ENCODE measurements at regions of chr10 and their contacts with region 1.

Region 1: GRCh38 chr10:48594803-48595538 is 9.9 kb downstream of the ARHGAP22 start:
- DNase-seq: no peak
- H3K4me3 Mint-ChIP-seq: no peak overlapping the region
- H3K27ac Mint-ChIP-seq: no peak overlapping the region
- H3K4me1 Mint-ChIP-seq: no peaks in the 10 kb centered on the region
- H3K27me3 Mint-ChIP-seq: peaks cover 4% of the 10 kb centered on the region

Region 2: DNA sequence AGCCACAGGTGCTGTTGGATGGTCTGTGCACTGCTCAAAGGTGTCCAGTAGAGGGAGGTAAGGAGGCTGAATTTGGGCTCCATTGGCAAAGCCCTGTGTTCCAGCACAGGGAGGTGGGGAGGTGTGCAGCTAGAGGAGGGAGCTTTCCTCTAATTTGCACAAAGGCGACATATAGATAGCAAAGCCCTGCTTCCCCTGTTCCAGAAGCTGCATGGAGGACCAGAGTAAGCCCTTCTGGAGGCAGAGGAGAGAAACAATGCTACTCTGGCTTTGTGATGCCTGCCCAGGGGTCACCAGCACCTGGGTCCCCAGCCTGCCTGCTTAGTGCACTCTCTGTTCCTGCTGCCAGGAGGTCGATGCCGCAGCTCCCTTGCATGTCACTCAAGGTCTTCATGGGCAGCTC is 13.3 kb after region 1 on chr10:
- intact Hi-C with region 1: loop called (anchors 1 kb)
- DNase-seq: no peak
- H3K4me3 Mint-ChIP-seq: no peak overlapping the region
- H3K27ac Mint-ChIP-seq: no peak overlapping the region
- H3K4me1 Mint-ChIP-seq: no peaks in the 10 kb centered on the region
- H3K27me3 Mint-ChIP-seq: peaks cover 25% of the 10 kb centered on the region

Measured in activated T-helper 2 cell treated with anti-CD3 and anti-CD28 coated beads, Interferon-gamma antibody, Interleukin-2, Interleukin-4, amounts not matched to agents 10 μg/mL and 5 μg/mL and 100 μg/mL, durations not matched to agents 14 hours and 24 hours and 36 hours (primary cell).